Astrocyte of the cerebellum (primary cell): ENCODE measurements at regions of chr3 and their contacts with region 1.

Region 1: GRCh38 chr3:195302431-195302830 is 31.5 kb upstream of the XXYLT1 start:
- DNase-seq: no peak
- H3K4me3 ChIP-seq: no peak overlapping the region
- CTCF ChIP-seq: no peak

Region 2: DNA sequence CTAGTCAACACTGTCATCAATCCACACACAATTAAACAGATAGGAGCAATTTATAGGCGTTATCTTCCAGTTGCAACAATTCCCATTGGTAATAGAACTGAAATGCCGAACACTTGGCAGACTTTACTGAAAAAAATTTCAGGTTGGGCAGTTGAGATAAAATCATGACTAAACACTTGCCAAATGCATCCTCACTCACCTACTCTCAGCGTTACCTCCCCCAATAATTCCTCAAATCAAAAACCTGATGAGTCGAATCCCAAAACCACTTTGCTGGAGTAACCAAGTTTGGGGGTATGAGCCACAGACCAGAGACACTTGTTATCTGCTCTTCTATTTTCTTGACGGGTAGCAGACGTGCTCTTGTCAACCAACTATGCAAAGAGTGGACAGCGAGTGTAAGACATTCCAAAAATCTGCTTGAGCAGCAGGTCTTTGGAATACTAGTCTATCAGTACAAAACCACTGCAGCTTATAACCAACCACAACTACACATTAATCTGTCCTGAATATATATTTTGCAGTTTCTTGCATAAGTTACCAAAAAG is 210.4 kb after region 1 on chr3:
- in situ Hi-C with region 1: loop called (anchors 10 kb)
- DNase-seq: no peak
- H3K4me3 ChIP-seq: no peak overlapping the region
- CTCF ChIP-seq: no peak